CD14-positive monocyte (primary cell): ENCODE measurements at regions of chr20 and their contacts with region 1.

Region 1: GRCh38 chr20:5596401-5597193 is 153.6 kb upstream of the SHLD1 start:
- DNase-seq: no peak
- H3K4me3 ChIP-seq: no peak overlapping the region
- H3K4me3 Mint-ChIP-seq: no peak overlapping the region
- H3K27ac ChIP-seq: peak overlapping the region in 1 of 2 donors; percentile 49
- H3K27ac Mint-ChIP-seq: peak overlapping the region in 5 of 7 donors; percentile 1 to 67 (median 24)
- H3K4me1 ChIP-seq: peaks cover 7 to 25% of the 10 kb centered on the region in 2 donors
- H3K4me1 Mint-ChIP-seq: peaks cover 15% of the 10 kb centered on the region
- H3K27me3 ChIP-seq: no peaks in the 10 kb centered on the region
- H3K27me3 Mint-ChIP-seq: no peaks in the 10 kb centered on the region
- CTCF ChIP-seq: no peak

Region 2: GRCh38 chr20:5550733-5551529 is 45.7 kb before region 1 on chr20:
- intact Hi-C with region 1: loop called in 1 of 2 experiments (anchors 10 kb)
- DNase-seq: no peak
- H3K4me3 ChIP-seq: no peak overlapping the region
- H3K4me3 Mint-ChIP-seq: no peak overlapping the region
- H3K27ac ChIP-seq: peak overlapping the region in 1 of 2 donors; percentile 1
- H3K27ac Mint-ChIP-seq: peak overlapping the region in 3 of 7 donors; percentile 24 to 64 (median 47)
- H3K4me1 ChIP-seq: no peaks in the 10 kb centered on the region
- H3K4me1 Mint-ChIP-seq: no peaks in the 10 kb centered on the region
- H3K27me3 ChIP-seq: no peaks in the 10 kb centered on the region
- H3K27me3 Mint-ChIP-seq: peaks cover 0 to 2% (median 0%) of the 10 kb centered on the region in 3 donors
- CTCF ChIP-seq: no peak

Region 3: DNA sequence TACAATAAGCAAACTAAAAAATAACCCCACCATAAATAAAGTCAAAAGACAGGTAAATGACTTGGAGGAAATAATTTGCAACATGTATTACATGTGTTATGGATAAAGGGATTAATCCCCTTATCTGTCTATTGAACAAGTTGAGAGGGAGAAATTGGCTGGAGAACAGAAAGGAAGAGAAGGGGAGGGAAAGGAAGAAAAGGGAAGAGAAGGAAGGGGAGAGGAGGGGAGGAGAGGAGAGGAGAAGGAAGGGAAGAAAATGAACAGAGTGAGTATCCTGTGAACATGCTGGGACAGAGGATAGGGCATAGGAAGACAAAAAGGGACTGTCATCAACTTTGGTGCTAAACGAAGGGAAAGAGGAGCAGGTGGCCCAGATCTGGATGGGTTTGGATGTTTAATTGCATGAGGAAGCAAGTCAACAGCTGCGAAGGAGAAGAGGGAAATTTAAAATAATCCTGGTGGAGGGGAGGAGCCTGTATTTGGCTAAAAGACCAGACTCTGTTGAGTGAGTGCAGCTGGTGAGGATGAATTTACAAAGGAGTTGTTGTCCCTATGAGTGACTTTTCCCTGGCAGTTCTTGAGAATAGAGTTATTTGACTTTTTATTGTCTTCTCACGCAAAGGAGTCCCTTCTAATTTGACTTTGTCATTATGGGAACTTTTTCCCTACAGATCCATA is 139.4 kb after region 1 on chr20:
- intact Hi-C with region 1: no loop called
- DNase-seq: no peak
- H3K4me3 ChIP-seq: no peak overlapping the region
- H3K4me3 Mint-ChIP-seq: peak overlapping the region in 1 of 2 donors; percentile 61
- H3K27ac ChIP-seq: no peak overlapping the region
- H3K27ac Mint-ChIP-seq: peak overlapping the region in 3 of 7 donors; percentile 3 to 52 (median 31)
- H3K4me1 ChIP-seq: peaks cover 22% of the 10 kb centered on the region in 2 donors
- H3K4me1 Mint-ChIP-seq: peaks cover 38% of the 10 kb centered on the region
- H3K27me3 ChIP-seq: no peaks in the 10 kb centered on the region
- H3K27me3 Mint-ChIP-seq: peaks cover 16 to 25% (median 17%) of the 10 kb centered on the region in 3 donors
- CTCF ChIP-seq: no peak

Region 4: GRCh38 chr20:5779071-5779900 is 182.7 kb after region 1 on chr20:
- intact Hi-C with region 1: loop called in 1 of 2 experiments (anchors 10 kb)
- DNase-seq: peak in 2 of 3 donors; percentile 6 to 20
- H3K4me3 ChIP-seq: no peak overlapping the region
- H3K4me3 Mint-ChIP-seq: no peak overlapping the region
- H3K27ac ChIP-seq: no peak overlapping the region
- H3K27ac Mint-ChIP-seq: peak overlapping the region in 2 of 7 donors; percentile 5 to 66
- H3K4me1 ChIP-seq: no peaks in the 10 kb centered on the region
- H3K4me1 Mint-ChIP-seq: peaks cover 6% of the 10 kb centered on the region
- H3K27me3 ChIP-seq: no peaks in the 10 kb centered on the region
- H3K27me3 Mint-ChIP-seq: no peaks in the 10 kb centered on the region
- CTCF ChIP-seq: no peak

Region 5: DNA sequence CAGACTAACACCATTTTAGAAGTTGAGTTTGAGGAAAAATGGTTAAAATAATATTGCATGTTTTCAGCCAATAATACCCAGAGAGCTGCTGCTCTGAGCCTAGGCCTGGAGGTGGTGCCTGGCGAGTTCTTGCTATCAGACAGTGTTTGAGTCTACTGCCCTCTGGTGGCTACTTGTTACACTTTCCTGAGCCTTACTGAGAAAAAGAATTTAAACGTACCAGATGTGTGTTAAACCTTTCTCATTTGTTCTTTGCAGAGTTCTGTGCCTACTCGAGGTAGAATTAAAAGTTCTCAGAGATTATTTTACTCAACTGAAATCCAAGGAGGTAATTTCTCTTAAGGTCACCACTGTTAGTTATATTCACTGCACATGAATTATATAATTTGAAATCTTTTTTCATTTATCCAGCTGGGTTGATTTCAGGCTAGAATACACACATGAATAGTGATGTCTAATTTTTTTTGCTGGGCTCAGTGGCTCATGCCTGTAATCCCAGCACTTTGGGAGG is 191.8 kb after region 1 on chr20:
- intact Hi-C with region 1: loop called in 1 of 2 experiments (anchors 5 kb)
- DNase-seq: peak; percentile 80 to 91 (median 85)
- H3K4me3 ChIP-seq: no peak overlapping the region
- H3K4me3 Mint-ChIP-seq: no peak overlapping the region
- H3K27ac ChIP-seq: no peak overlapping the region
- H3K27ac Mint-ChIP-seq: peak overlapping the region in 3 of 7 donors; percentile 11 to 77 (median 37)
- H3K4me1 ChIP-seq: no peaks in the 10 kb centered on the region
- H3K4me1 Mint-ChIP-seq: no peaks in the 10 kb centered on the region
- H3K27me3 ChIP-seq: no peaks in the 10 kb centered on the region
- H3K27me3 Mint-ChIP-seq: no peaks in the 10 kb centered on the region
- CTCF ChIP-seq: peak; percentile 77